Ascending aorta (tissue), 2 donors: ENCODE measurements at regions of chr4 and their contacts with region 1.

Region 1: DNA sequence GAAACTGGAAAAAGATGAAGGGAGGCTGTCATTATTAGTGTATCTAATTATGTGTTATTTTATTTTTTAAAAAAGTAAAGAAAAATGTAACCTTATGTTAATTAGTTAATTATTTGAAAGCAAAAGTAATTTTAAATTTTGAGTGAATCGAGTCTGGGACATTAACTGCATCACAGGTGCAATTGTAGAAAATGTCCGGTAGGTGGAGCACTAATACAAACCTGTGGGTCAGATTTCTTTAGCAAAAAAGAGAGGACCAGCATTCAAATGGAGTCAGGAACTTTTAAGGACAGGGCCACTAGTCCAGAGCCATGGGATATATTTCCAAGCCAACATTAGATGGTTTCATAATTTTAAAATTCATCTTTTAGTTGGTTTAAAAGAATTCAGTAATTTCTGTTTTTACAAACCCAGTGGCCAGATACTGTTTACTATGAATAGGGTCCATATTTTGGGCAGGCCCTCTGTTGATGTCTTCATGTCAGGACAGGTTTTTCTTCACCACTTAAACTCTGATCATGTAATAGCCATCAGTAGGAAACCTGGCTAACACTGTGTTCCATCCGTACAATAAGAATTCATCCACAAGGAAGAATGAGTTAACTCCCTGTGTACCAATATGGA is 27.2 kb downstream of the BST1 start:
- DNase-seq: no peak
- H3K4me3 ChIP-seq: no peak overlapping the region
- H3K27ac ChIP-seq: no peak overlapping the region
- H3K4me1 ChIP-seq: no peaks in the 10 kb centered on the region
- H3K27me3 ChIP-seq: no peaks in the 10 kb centered on the region
- CTCF ChIP-seq: peak; percentile 51 to 80 (median 79)

Region 2: DNA sequence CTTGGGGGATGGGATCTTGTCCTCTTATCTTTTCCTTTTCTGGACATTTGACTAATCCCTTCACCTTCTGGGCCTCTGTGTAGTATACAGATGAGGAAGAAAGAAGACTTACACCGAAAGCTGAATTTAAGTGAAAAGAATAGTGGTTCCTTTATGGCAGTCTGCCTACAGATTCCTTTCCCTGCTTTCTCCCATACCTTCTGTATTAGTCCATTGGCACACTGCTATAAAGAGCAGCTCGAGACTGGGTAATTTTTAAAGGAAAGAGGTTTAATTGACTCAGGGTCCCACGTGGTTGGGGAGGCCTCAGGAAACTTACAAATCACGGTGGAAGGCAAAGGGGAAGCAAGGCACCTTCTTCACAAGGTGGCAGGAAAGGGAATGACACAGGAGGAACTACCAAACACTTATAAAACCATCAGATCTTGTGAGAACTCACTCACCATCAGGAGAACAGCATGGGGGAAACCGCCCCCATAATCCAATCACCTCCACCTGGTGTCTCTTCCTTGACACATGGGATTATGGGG is 14.1 kb after region 1 on chr4:
- intact Hi-C with region 1: no loop called
- DNase-seq: no peak
- H3K4me3 ChIP-seq: no peak overlapping the region
- H3K27ac ChIP-seq: no peak overlapping the region
- H3K4me1 ChIP-seq: no peaks in the 10 kb centered on the region
- H3K27me3 ChIP-seq: no peaks in the 10 kb centered on the region
- CTCF ChIP-seq: no peak

Region 3: DNA sequence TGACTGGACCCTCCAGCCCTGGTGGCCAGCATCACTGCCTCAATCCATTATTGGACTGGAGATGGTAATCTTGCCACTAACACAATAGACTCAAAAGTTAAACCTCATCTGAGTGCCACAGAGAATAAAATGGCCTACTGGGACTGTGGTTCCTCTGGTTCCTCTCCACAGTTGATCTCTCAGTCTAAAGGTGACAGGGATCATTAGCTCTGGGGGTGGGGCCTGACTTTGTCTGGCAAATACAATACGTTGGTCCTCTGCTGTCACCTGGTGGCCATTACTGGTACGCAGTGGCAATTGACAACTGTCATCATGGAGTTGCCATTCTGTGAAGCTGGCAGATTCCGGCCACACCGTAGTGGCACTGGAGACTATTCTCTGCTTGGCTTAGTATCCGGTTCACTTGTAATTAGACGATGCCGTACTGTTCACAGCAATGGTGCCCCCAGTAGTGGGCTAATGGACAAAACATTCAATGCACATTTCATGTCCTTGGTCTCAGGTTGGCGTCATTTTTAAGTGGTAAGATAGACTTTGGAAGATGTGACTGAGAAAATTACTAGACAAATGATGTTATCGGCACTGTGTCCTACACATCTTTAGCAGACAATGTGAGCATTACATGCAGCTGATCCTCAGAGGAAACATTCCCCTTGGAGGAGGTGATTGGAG is 226.3 kb after region 1 on chr4:
- intact Hi-C with region 1: loop called (anchors 5 kb)
- DNase-seq: peak; percentile 36 to 86
- H3K4me3 ChIP-seq: no peak overlapping the region
- H3K27ac ChIP-seq: no peak overlapping the region
- H3K4me1 ChIP-seq: no peaks in the 10 kb centered on the region
- H3K27me3 ChIP-seq: no peaks in the 10 kb centered on the region
- CTCF ChIP-seq: peak; percentile 73 to 87 (median 86)